Heart left ventricle (tissue), 16 donors: ENCODE measurements at regions of chrX and their contacts with region 1.

Region 1: DNA sequence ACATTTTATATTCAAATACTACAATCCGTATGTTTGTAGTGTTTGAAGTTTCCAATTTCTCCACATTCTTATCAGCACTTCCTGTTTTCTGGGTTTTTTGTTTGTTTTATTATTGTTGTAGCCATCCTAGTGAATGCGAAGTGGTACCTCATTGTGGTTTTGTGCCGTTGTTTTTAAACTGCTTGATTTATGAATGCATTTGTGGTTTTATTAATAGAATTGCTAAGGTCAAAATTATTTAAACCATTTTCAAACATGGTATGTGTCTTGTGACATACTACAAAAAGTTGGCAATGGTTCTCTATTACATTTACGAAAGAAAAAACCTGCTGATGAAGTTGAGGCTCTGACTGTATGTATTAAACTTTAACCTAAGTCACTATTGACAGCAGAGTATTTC is 780.0 kb upstream of the MAGEB2 start:
- DNase-seq: no peak
- ATAC-seq: no peak
- H3K4me3 ChIP-seq: no peak overlapping the region
- H3K27ac ChIP-seq: no peak overlapping the region
- H3K4me1 ChIP-seq: no peaks in the 10 kb centered on the region
- H3K27me3 ChIP-seq: no peaks in the 10 kb centered on the region
- CTCF ChIP-seq: no peak
- POLR2A ChIP-seq: no peak

Region 2: DNA sequence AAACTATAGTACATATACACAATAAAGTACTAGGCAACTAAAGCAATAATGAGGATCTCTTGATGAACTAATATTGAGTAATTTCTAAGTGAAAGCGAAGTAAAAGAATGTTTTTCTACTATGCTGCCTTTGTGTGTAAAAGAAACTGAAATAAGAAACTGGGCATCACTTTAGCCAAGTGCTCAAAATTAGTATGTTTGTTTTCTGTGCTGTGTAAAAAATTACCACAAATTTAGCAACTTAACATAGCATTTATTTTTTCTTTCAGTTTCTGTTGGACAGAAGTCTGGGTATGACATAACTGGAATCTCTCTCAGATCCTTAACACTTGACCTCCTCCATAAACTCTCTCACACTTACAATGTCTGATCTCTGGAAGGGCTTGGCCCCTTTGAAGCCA is 92.9 kb after region 1 on chrX:
- intact Hi-C with region 1: loop called in 1 of 10 experiments (anchors 5 kb)
- DNase-seq: no peak
- ATAC-seq: no peak
- H3K4me3 ChIP-seq: no peak overlapping the region
- H3K27ac ChIP-seq: no peak overlapping the region
- H3K4me1 ChIP-seq: no peaks in the 10 kb centered on the region
- H3K27me3 ChIP-seq: no peaks in the 10 kb centered on the region
- CTCF ChIP-seq: no peak
- POLR2A ChIP-seq: no peak